ENCODE measurements at regions of chr5 and their contacts with region 1.

Region 1: DNA sequence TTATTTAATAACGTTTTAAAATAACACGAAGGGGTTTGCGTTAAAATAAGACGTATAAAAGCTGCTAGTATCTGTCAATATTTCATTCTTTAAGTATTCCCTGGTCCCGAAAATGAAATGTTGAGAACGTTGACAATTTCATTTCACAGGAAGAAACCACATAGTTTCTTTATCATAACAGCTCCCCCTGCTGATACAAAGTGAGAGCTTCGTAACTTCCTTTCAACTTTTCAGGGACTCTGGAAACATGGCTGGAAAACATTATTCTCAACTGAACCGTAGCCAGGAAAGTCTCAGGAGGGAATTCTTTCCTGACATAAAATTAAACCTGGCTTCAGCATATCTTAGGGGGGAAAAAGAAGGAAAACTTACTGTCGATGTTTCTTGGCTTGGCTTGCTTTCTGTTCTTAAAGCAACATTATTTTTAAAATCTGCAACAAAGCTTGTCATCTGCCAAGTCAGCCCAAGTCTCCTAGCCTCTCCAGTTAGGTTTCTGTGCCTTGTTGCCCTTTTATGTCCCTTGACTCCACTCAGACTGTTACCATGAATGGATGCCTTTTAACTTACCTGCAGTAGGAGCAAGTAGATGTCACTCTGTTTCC is 122.9 kb upstream of the DAB2 start:
- DNase-seq: no peak
- ATAC-seq: peak; percentile 85 to 88 (median 86)
- H3K4me3 ChIP-seq: no peak overlapping the region
- H3K27ac ChIP-seq: no peak overlapping the region
- H3K4me1 ChIP-seq: peaks cover 0 to 3% (median 0%) of the 10 kb centered on the region in 4 donors
- H3K27me3 ChIP-seq: no peaks in the 10 kb centered on the region
- CTCF ChIP-seq: peak; percentile 66 to 84 (median 74)
- POLR2A ChIP-seq: no peak

Region 2: GRCh38 chr5:39376293-39376714 is 171.3 kb before region 1 on chr5:
- intact Hi-C with region 1: loop called (anchors 5 kb)
- DNase-seq: no peak
- ATAC-seq: peak; percentile 68 to 84 (median 77)
- H3K4me3 ChIP-seq: no peak overlapping the region
- H3K27ac ChIP-seq: no peak overlapping the region
- H3K4me1 ChIP-seq: peaks cover 0 to 29% (median 14%) of the 10 kb centered on the region in 4 donors
- H3K27me3 ChIP-seq: no peaks in the 10 kb centered on the region
- CTCF ChIP-seq: peak; percentile 72 to 83 (median 80)
- POLR2A ChIP-seq: no peak